ENCODE measurements at regions of chr2 and their contacts with region 1.

Region 1: GRCh38 chr2:233443468-233444183 is 89.3 kb downstream of the DGKD start:
- DNase-seq: peak; percentile 76 to 87 (median 86)
- H3K4me3 ChIP-seq: no peak overlapping the region
- H3K27ac ChIP-seq: no peak overlapping the region
- H3K4me1 ChIP-seq: peaks cover 11% of the 10 kb centered on the region
- H3K27me3 ChIP-seq: no peaks in the 10 kb centered on the region
- CTCF ChIP-seq: peak; percentile 71 to 81 (median 80)
- EP300 ChIP-seq: no peak
- POLR2A ChIP-seq: no peak

Region 2: DNA sequence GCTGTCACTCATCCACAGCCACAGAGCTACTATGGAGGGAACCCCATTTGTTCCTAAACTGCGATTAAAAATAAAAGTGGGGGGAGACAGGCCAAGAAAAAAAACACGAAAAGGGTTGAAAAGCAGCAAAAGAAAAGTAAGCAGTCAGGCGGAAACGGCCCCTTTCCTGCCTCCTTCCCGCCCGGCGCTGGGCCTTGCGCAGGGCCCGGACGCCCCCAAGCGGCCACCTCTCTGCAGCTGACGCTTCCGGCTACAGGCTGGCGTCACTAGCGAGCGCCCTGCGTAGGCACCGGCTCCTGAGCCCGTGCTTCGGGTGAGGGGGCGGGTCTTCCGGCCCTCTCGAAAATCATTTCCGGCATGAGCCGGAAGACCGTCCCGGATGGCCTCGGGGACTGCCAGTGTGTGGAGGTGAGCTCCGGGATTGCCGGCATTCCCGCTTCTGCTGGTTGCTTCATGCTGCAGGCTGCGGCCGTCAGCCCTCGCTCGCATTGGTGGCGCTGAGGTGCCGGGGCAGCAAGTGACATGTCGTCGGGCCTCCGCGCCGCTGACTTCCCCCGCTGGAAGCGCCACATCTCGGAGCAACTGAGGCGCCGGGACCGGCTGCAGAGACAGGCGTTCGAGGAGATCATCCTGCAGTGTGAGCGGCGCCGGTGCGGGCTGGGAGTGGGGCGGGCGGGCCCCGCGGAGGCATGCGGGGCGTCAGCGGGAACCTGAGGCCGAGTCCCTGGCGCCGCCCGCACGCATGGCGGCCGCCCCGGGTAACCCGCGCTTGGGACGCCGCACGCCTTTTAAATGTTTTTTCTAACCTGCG is 192.1 kb before region 1 on chr2 and contains the start of gene ATG16L1:
- intact Hi-C with region 1: loop called in 3 of 4 experiments (anchors 5 to 10 kb)
- DNase-seq: peak; percentile 93 to 98 (median 95)
- H3K4me3 ChIP-seq: peak within 1 kb of the TSS; percentile 91
- H3K27ac ChIP-seq: peak within 1 kb of the TSS in 1 of 2 donors; percentile 30
- H3K4me1 ChIP-seq: peaks cover 6% of the 10 kb centered on the region
- H3K27me3 ChIP-seq: no peaks in the 10 kb centered on the region
- CTCF ChIP-seq: peak; percentile 92 to 97 (median 97)
- EP300 ChIP-seq: peak; percentile 46
- POLR2A ChIP-seq: peak; percentile 46
- total RNA-seq, gene ATG16L1: 16.3 to 32.3 (median 21.4) TPM

Region 3: DNA sequence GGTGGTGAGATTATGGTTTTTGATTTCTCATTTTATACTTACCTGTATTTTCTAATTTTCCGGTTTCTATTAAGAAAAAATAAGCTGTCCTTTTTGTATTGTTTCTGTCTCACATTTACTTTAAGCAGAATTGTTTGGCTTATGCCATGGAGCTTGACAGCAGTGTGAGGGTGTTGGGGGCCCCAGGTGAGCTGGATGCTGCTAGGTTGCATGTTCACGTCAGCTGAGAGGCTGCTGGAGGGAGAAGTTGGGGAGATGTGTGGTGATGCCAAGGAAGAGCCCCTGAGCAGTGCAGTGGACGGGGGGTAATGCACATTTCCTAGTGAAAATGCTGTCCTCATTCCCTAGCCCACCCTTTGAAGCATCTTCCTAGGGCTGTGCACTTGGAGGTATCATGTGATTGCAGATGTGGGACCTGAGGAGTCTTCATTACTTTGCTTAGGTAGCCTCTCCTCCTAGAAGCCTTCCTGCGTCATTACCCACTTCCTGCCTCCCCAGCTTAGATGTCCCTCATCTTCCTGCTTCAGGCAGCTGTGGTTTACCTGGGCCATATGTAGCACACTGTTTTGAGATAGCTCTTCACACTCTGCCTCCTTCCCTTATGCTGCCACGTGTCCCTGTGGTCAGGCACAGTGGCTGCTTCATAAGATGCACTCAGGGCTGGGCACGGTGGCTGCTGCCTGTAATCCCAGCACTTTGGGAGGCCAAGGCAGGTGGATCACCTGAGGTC is 175.9 kb before region 1 on chr2:
- intact Hi-C with region 1: loop called in 1 of 4 experiments (anchors 10 kb)
- DNase-seq: no peak
- H3K4me3 ChIP-seq: no peak overlapping the region
- H3K27ac ChIP-seq: no peak overlapping the region
- H3K4me1 ChIP-seq: no peaks in the 10 kb centered on the region
- H3K27me3 ChIP-seq: no peaks in the 10 kb centered on the region
- CTCF ChIP-seq: no peak
- EP300 ChIP-seq: no peak
- POLR2A ChIP-seq: no peak

Region 4: DNA sequence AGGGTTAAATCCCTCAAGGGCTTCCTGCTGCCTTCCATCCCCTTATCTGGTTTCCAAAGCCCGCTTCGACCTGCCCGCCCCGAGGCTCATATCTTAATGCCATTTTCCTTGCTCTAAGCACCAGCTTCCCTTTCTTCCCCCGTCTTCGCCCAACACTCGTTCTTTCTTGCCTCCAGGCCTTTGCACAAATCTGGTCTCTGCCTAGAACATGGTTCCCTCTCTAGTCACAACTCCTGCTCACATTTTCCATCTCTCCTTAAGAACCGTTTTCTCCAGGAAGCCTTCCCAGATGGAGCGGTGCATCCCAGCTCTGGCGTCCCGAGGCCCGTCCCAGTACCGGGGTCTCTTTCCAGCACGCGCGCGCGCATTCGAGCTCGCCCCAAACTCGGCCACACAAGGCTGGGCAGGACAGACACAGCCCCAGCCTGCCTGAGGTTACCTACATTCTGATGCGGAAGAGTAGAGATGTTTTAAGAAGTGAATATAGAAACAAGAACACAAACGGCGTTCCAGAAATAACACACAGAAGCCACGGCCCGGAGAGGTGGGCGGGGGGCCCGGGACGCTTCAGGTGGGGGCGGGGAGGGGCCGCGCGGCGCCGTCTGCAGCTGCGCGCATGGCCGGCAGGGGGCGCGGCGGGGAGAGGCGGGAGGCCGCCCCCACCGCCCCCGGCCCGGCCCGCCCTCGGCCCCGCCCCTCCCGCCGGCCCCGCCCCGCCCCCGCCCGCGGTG is 89.7 kb before region 1 on chr2 and contains the start of gene DGKD:
- intact Hi-C with region 1: loop called (anchors 2 to 10 kb)
- DNase-seq: peak; percentile 50 to 83 (median 74)
- H3K4me3 ChIP-seq: peak within 1 kb of the TSS; percentile 75
- H3K27ac ChIP-seq: no peak within 1 kb of the TSS
- H3K4me1 ChIP-seq: peaks cover 12% of the 10 kb centered on the region
- H3K27me3 ChIP-seq: no peaks in the 10 kb centered on the region
- CTCF ChIP-seq: no peak
- EP300 ChIP-seq: no peak
- POLR2A ChIP-seq: no peak
- total RNA-seq, gene DGKD: 9.4 to 81.8 (median 39.5) TPM

Region 5: DNA sequence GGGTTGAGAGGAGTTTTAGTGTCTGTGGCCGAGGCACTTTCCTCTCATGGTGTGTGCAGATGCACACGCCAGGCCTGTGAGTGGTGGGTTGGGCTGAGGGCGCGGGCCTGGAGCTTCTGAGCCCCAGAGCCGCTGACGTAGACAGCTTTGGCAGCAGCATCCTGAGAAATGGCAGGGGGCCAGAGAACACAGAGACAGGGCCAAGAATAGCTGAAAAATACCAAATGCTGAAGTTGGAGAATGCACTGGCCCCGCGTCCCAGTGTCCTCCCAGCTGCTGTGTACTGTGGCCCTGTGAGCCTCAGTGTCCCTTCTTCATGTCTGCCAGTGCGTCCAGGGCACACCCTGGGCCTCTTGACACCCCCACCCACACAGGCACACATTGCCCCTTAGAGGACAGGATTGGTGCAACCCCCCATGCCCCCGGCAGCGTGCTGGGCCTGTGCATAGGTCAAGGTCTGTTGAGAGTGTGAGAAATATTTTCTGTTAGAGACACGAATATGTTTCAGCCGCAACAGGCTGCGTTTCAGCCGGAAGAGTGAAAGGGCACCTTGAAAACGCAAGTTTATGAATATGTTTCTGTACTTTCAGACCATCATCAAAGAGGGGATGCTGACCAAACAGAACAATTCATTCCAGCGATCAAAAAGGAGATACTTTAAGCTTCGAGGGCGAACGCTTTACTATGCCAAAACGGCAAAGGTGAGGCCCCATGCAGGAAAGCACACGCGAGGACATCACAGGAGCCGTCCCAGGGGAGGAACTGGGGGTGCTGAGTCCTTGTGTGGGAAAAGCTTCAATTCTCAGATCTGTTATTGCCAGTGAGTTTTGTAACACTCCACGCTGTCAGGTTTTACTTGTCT is 55.7 kb before region 1 on chr2:
- intact Hi-C with region 1: loop called in 1 of 4 experiments (anchors 10 kb)
- DNase-seq: peak; percentile 95 to 97 (median 97)
- H3K4me3 ChIP-seq: peak overlapping the region; percentile 10
- H3K27ac ChIP-seq: peak overlapping the region; percentile 59 to 91
- H3K4me1 ChIP-seq: peaks cover 32% of the 10 kb centered on the region
- H3K27me3 ChIP-seq: no peaks in the 10 kb centered on the region
- CTCF ChIP-seq: peak in 1 of 3 donors; percentile 28
- EP300 ChIP-seq: no peak
- POLR2A ChIP-seq: peak; percentile 50

Region 6: DNA sequence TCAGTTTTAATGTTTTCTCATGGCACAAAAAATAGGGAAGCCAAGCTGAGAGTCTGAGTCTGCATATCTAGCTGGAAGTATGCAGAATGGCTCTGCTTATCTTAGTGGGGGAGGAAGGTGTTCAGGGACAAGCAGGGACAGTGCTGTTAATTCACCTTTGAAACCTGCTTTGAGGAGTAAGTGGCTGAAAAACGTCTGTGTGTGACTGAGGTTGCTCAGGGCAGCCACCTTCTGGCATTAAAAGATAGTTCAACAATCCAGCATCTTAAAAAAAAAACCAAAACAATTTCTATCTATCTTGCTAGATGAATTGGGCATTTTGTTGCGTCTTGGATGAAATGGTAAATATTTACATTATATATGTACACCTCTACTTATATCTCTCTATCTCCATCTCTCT is 471.5 kb after region 1 on chr2:
- intact Hi-C with region 1: no loop called
- DNase-seq: no peak
- H3K4me3 ChIP-seq: no peak overlapping the region
- H3K27ac ChIP-seq: no peak overlapping the region
- H3K4me1 ChIP-seq: no peaks in the 10 kb centered on the region
- H3K27me3 ChIP-seq: no peaks in the 10 kb centered on the region
- CTCF ChIP-seq: no peak
- EP300 ChIP-seq: no peak
- POLR2A ChIP-seq: no peak